Activated CD4-positive, alpha-beta T cell treated with anti-CD3 and anti-CD28 coated beads, Interleukin-2, amount 10 ng/mL, durations not matched to agents 24 days and 14 days (primary cell): ENCODE measurements at regions of chr4 and their contacts with region 1.

Region 1: DNA sequence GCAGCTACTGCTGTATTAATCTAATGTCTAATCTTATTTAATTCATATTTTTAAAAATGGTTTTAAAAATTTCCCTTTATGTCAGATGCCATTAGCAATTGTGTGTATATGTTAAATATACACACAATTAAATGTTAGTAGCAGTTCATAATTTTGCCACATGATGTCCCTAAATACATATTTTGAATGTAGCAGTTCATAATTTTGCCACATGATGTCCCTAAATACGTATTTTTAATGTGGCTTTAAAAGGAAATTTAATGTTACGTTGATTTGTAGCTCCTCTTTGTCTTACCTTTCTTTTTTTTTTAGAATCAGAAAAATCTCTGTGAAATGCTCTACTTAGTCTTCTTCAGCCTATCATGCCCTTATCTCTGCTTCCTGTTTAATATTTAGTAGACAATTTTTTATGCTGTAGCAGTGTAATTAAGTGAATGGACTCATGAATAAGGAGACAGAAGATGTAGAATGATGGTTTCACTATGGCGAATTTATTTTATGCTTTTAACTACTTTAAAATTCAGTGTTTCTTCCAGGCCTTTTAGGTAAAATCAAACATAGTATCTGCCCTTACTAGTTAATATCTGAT is 26.1 kb downstream of the RBM46 start:
- DNase-seq: no peak
- H3K4me3 Mint-ChIP-seq: no peak overlapping the region
- H3K27ac Mint-ChIP-seq: no peak overlapping the region
- H3K4me1 Mint-ChIP-seq: no peaks in the 10 kb centered on the region
- H3K27me3 Mint-ChIP-seq: peaks cover 2% of the 10 kb centered on the region

Region 2: DNA sequence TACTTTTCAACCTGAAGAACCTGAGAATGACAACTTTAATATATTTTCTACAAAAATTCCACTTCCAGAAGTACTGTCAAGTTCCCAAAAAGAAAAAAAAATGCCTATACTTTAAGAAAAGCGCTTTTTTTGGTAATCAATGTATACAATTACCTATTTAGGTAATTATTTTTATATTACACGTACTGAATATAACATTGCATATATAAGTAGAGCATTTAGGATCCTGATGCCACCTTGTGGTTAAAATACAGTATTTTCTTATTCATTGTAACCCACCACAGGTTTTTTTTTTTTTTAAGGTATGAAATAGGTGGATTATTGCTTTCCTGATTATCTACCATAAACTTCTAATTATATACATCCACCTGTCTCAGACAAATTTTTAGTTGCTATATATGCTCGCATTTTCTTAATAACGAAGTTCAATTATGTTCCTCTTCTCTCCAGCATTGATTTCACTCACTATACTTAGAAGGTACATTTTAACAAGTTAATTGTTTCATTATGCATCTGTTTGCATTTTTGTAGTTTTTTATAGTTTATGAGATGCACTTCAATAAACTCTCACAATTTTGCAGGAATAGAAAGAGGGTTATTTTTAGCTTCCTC is 564.4 kb after region 1 on chr4:
- intact Hi-C with region 1: loop called (anchors 2 kb)
- DNase-seq: no peak
- H3K4me3 Mint-ChIP-seq: no peak overlapping the region
- H3K27ac Mint-ChIP-seq: no peak overlapping the region
- H3K4me1 Mint-ChIP-seq: peaks cover 8% of the 10 kb centered on the region
- H3K27me3 Mint-ChIP-seq: no peaks in the 10 kb centered on the region